BJ (cell line): ENCODE measurements at regions of chr3 and their contacts with region 1.

Region 1: DNA sequence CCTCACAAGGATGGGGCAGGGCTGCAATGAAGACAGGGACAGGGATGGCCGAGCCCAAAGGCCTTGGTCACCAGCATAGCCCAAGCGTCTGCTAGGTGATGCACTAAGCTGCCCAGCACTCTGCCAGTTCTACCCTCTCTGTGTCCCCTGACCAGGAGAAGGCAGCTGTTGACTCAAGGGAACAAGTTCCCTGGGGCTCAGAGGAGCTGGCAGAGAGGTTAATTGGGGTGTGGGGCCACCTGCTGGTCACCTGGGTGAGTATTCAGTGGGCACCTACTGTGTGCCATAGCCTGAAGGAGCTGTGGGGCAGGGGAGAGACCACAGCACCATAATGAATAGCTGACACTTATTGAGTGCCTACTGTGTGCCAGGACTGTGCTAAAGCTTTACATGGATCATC is 22.0 kb upstream of the DOCK3 start:
- DNase-seq: no peak
- H3K4me3 ChIP-seq: no peak overlapping the region
- H3K27me3 ChIP-seq: no peaks in the 10 kb centered on the region
- CTCF ChIP-seq: peak; percentile 38

Region 2: GRCh38 chr3:50405249-50405648 is 247.5 kb before region 1 on chr3:
- CTCF ChIA-PET with region 1: no interaction called
- POLR2A ChIA-PET with region 1: no interaction called
- DNase-seq: no peak
- H3K4me3 ChIP-seq: no peak overlapping the region
- H3K27me3 ChIP-seq: peaks cover 4% of the 10 kb centered on the region; the same call in 1 of the 2 replicates
- CTCF ChIP-seq: no peak

Region 3: DNA sequence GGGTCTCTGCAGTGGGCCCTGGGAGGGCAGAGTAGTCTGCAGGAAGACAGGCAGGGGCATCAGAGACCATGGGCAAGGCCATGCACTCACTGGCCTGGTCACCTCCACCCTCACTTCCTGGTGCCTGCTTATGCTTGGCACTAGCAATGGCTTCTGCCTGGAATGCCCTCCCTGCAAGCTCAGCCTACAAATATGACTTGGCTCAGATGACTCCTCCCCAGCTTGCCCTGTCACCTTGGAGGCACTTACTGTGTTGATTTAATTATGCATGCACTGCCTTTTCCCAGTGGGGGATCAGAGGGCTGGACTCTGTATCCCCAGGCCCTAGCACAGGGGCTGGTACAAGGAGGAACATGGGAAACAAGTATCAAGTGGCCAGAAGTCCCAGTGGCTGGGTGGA is 93.0 kb before region 1 on chr3:
- CTCF ChIA-PET with region 1: no interaction called
- POLR2A ChIA-PET with region 1: no interaction called
- DNase-seq: no peak
- H3K4me3 ChIP-seq: no peak overlapping the region
- H3K27me3 ChIP-seq: no peaks in the 10 kb centered on the region; the same call in 1 of the 2 replicates
- CTCF ChIP-seq: no peak

Region 4: DNA sequence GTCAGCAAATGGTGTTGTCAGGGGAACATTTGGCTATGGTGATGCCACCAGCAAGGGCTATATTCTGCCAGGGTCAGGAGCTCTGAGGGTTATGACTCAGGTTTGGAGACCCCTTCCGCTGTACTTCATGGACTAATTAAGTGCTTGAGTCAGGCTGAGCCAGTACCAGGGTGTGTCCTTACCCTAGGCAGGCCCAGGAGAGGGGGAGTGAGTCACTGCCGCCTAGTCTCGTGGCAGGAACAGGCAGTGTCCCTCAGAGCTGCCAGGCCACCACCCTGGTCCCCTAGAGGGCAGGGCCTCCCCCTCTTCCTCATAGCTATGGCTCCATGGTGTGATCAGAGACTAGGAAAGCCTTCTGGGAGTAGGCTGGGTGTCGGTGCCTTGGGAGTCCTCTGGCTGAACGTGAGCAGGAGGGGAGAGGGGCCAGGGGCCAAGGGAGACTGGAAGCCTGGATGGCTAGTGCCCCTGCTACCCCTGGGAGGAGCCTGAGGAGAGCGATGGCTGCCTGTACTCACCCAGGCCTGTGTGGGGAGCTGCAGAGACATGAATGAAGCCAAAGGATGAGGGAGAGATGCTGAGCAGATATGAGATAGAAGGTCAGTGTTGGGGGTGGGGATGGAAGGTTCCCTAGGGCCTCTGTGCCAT is 25.2 kb before region 1 on chr3:
- CTCF ChIA-PET with region 1: interaction called, 11 read pairs
- POLR2A ChIA-PET with region 1: no interaction called
- DNase-seq: no peak
- H3K4me3 ChIP-seq: no peak overlapping the region
- H3K27me3 ChIP-seq: no peaks in the 10 kb centered on the region
- CTCF ChIP-seq: peak; percentile 58